Sciatic nerve (tissue), 2 donors: ENCODE measurements at regions of chr3 and their contacts with region 1.

Region 1: GRCh38 chr3:124995460-124995994 is 60.3 kb downstream of the HEG1 start:
- DNase-seq: peak; percentile 77
- ATAC-seq: peak; percentile 96

Region 2: DNA sequence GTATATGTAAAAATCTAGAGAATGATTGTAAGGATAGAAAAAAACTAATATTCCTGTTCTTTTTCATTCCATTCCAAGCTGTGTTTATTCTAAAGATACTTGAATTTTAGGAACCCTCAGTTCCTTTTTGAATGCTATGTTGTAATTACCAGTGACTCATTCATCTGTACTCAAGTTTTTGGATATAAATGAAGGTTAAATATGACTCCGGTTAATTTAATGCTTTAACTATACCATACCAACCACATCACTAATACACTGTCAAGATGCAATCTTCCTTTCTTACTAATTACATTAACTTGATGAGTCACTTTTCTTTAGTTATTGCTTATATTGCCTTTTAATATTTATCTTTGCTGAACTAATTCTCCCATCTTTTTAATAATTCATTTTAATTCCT is 448.4 kb after region 1 on chr3:
- intact Hi-C with region 1: loop called (anchors 5 kb)
- DNase-seq: no peak
- ATAC-seq: no peak